Esophagus muscularis mucosa (tissue), 4 donors: ENCODE measurements at regions of chr1 and their contacts with region 1.

Region 1: GRCh38 chr1:84944767-84945486 is 51.9 kb upstream of the LPAR3 start:
- DNase-seq: no peak
- H3K4me3 ChIP-seq: peak overlapping the region; percentile 46 to 60 (median 52)
- H3K27ac ChIP-seq: peak overlapping the region; percentile 55 to 70 (median 60)
- H3K4me1 ChIP-seq: peaks cover 0 to 16% (median 12%) of the 10 kb centered on the region in 4 donors
- H3K27me3 ChIP-seq: no peaks in the 10 kb centered on the region
- CTCF ChIP-seq: peak; percentile 81 to 93 (median 92)
- EP300 ChIP-seq: no peak
- POLR2A ChIP-seq: no peak

Region 2: GRCh38 chr1:84686223-84686622 is 258.7 kb before region 1 on chr1:
- intact Hi-C with region 1: no loop called
- DNase-seq: no peak
- H3K4me3 ChIP-seq: no peak overlapping the region
- H3K27ac ChIP-seq: no peak overlapping the region
- H3K4me1 ChIP-seq: peaks cover 9 to 34% (median 22%) of the 10 kb centered on the region in 4 donors
- H3K27me3 ChIP-seq: no peaks in the 10 kb centered on the region
- CTCF ChIP-seq: no peak
- EP300 ChIP-seq: no peak
- POLR2A ChIP-seq: no peak

Region 3: DNA sequence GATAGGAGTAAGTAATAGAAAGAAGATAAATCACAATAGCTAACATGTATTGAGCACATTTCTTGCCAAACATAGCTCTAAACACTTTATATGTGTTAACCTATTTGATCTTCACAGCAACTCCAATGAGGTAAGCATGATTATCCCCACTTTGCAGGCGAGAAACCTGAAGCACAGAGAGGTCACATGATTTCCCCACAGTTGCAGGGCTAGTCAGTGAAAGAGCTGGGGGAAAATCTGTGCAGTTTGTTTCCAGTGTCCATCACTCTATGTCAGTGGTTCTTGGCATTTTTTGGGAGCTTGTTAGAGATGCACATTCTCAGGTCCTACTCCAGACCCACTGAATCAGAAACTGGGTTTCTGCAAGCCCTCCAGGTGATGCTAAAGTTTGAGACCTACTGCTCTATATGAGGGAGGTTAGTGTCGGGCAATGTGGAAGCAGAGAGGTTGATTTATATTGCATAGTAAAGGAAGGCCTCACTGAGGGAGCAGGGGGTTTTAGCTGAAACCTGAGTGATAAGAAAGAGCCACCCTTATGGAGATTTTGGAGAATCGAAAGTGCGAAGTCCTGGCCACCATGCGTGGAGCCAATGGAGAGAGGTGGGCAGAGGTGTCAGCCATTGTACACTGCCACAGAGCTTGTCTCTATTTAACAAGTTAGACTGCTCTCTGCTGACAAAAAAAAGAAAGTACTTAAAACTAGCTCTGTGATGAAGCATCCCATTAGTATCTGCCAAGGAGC is 82.5 kb after region 1 on chr1:
- intact Hi-C with region 1: loop called (anchors 10 kb)
- DNase-seq: no peak
- H3K4me3 ChIP-seq: no peak overlapping the region
- H3K27ac ChIP-seq: no peak overlapping the region
- H3K4me1 ChIP-seq: no peaks in the 10 kb centered on the region
- H3K27me3 ChIP-seq: no peaks in the 10 kb centered on the region
- CTCF ChIP-seq: peak in 1 of 3 experiments; percentile 16
- EP300 ChIP-seq: no peak
- POLR2A ChIP-seq: no peak

Region 4: GRCh38 chr1:85109475-85109874 is 164.5 kb after region 1 on chr1:
- intact Hi-C with region 1: loop called (anchors 10 kb)
- DNase-seq: no peak
- H3K4me3 ChIP-seq: no peak overlapping the region
- H3K27ac ChIP-seq: no peak overlapping the region
- H3K4me1 ChIP-seq: no peaks in the 10 kb centered on the region
- H3K27me3 ChIP-seq: no peaks in the 10 kb centered on the region
- CTCF ChIP-seq: peak; percentile 79 to 88 (median 87)
- EP300 ChIP-seq: no peak
- POLR2A ChIP-seq: no peak

Region 5: DNA sequence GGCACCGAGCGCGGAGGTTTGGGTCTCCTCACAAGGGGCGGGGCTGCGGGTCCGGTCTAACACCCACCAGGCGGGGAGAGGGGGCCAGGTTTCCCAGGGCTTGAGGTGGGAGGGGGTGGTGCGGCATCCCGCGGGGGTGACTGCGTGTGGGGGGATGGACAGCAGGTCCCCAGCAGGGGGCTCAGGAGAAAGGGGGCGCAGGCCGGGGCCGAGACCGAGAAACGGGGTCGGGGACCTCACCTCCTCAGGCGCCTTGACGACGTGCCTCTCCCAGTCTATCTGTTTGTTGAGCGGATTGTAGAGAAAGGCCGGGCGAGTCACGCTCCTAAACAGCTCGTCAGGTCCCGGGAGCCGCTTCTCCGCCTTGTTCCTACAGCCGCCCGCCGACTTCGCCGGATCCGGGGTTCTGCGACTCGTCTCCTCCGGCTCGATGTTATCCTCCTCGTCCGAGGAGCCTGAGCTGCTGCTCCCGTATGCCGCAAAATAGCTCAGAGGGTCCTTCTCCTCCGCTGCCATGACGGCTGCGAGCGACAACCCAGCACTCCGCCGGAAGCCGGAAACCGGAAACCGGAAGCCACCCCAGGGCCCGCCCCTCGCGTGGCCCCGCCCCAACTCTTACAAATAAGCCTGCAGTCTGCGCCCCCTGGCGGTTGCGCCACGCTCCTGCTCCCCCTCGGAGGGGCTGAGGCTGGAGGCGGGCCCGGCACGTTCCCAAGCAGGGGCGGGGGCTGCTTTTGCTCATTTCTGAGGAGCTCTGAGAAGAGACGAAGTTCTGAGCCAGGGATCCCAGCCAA is 314.4 kb after region 1 on chr1 and contains the start of gene C1orf52:
- intact Hi-C with region 1: loop called (anchors 5 kb)
- DNase-seq: peak; percentile 99
- H3K4me3 ChIP-seq: peak within 1 kb of the TSS; percentile 73 to 96 (median 82)
- H3K27ac ChIP-seq: peak within 1 kb of the TSS; percentile 71 to 91 (median 85)
- H3K4me1 ChIP-seq: peaks cover 24 to 52% (median 48%) of the 10 kb centered on the region in 4 donors
- H3K27me3 ChIP-seq: no peaks in the 10 kb centered on the region
- CTCF ChIP-seq: peak in 2 of 3 experiments; percentile 99 to 100
- EP300 ChIP-seq: no peak
- POLR2A ChIP-seq: peak; percentile 67
- total RNA-seq, gene C1orf52: 11.2 to 22.4 (median 15.4) TPM